B cell (primary cell): ENCODE measurements at regions of chr2 and their contacts with region 1.

Region 1: GRCh38 chr2:30287857-30288513 is 56.7 kb downstream of the LBH start:
- DNase-seq: peak; percentile 77
- ATAC-seq: peak; percentile 85
- H3K4me3 ChIP-seq: peak overlapping the region; percentile 19 to 69 (median 34)
- H3K4me3 Mint-ChIP-seq: peak overlapping the region; percentile 58
- H3K27ac ChIP-seq: peak overlapping the region; percentile 81 to 86
- H3K27ac Mint-ChIP-seq: peak overlapping the region; percentile 84
- H3K4me1 ChIP-seq: peaks cover 83 to 91% of the 10 kb centered on the region in 2 donors
- H3K4me1 Mint-ChIP-seq: peaks cover 82% of the 10 kb centered on the region
- H3K27me3 ChIP-seq: no peaks in the 10 kb centered on the region
- H3K27me3 Mint-ChIP-seq: no peaks in the 10 kb centered on the region
- CTCF ChIP-seq: no peak

Region 2: DNA sequence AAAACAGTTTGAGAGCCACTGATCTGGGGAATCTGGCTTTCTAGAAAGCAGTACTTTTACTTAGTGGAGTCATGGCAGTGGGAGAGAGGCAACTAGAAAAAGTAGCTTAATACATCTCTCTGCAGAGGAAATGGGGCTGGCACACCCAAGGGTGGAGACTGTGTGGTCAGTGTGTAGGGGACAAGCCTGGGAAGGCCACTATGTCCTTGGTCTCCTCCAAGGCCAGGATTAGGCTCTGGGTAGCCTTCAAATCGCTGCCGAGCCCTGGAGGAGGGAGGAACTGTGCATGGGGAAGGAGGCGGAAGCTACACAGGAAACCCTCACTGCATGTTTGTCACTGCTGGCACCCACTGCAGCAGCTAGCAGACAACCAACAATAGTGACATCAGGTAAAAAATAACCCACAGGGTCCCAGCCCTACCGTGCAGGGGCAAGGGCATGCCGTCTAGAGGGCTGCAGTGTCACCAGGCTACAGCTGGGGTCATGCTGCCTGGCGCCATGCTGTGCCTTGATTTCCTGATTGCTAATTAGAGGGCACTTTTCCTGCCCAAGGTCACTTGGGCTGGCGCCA is 21.8 kb before region 1 on chr2:
- CTCF ChIA-PET with region 1: interaction called, 14 read pairs
- POLR2A ChIA-PET with region 1: interaction called, 11 read pairs
- intact Hi-C with region 1: loop called (anchors 1 kb)
- DNase-seq: peak; percentile 61
- ATAC-seq: peak; percentile 85
- H3K4me3 ChIP-seq: peak overlapping the region in 3 of 5 experiments; percentile 4 to 22 (median 16)
- H3K4me3 Mint-ChIP-seq: peak overlapping the region; percentile 85
- H3K27ac ChIP-seq: peak overlapping the region; percentile 76 to 90
- H3K27ac Mint-ChIP-seq: peak overlapping the region; percentile 99
- H3K4me1 ChIP-seq: peaks cover 64 to 72% of the 10 kb centered on the region in 2 donors
- H3K4me1 Mint-ChIP-seq: peaks cover 81% of the 10 kb centered on the region
- H3K27me3 ChIP-seq: no peaks in the 10 kb centered on the region
- H3K27me3 Mint-ChIP-seq: no peaks in the 10 kb centered on the region
- CTCF ChIP-seq: no peak

Region 3: DNA sequence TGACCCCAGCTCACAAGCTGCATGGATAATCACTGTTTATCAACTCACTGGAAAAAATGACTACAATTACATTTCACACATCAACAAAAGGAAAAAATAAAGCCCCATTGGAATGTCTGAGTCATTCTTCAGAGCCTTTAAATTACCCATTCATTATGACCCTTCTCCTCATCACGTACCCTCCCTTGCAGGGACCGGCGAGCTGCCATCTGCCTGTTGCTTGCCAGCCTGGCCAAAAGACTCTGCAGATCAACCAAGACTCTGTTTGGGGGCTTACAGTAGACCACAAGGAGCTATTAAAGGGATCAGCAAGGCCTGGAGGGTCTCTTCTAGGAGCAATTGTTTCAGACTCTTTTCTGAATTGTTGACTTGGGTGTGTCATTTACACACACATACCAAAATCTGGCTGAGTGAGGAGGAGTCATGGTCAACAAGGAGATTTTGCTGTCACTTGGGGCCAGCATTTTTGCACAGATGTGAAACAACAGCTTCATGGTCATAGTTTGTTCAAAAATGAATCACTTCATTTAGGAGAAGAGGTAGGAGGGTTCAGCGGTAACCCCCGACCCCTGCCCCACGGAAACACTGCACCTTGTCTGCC is 14.6 kb before region 1 on chr2:
- CTCF ChIA-PET with region 1: interaction called, 8 read pairs
- POLR2A ChIA-PET with region 1: interaction called, 11 read pairs
- intact Hi-C with region 1: no loop called
- DNase-seq: no peak
- ATAC-seq: no peak
- H3K4me3 ChIP-seq: no peak overlapping the region
- H3K4me3 Mint-ChIP-seq: peak overlapping the region; percentile 8
- H3K27ac ChIP-seq: no peak overlapping the region
- H3K27ac Mint-ChIP-seq: peak overlapping the region; percentile 90
- H3K4me1 ChIP-seq: peaks cover 73 to 90% of the 10 kb centered on the region in 2 donors
- H3K4me1 Mint-ChIP-seq: peaks cover 86% of the 10 kb centered on the region
- H3K27me3 ChIP-seq: no peaks in the 10 kb centered on the region
- H3K27me3 Mint-ChIP-seq: no peaks in the 10 kb centered on the region
- CTCF ChIP-seq: no peak